CD4-positive, alpha-beta memory T cell (primary cell): ENCODE measurements at regions of chr11 and their contacts with region 1.

Region 1: GRCh38 chr11:121367001-121367843 is 74.7 kb downstream of the SC5D start:
- DNase-seq: peak; percentile 50 to 64 (median 59)
- H3K4me3 ChIP-seq: peak overlapping the region in 1 of 2 donors; percentile 34
- H3K4me3 Mint-ChIP-seq: peak overlapping the region; percentile 76 to 93 (median 86)
- H3K27ac ChIP-seq: peak overlapping the region; percentile 22
- H3K27ac Mint-ChIP-seq: peak overlapping the region; percentile 75 to 97 (median 93)
- H3K4me1 ChIP-seq: peaks cover 24% of the 10 kb centered on the region
- H3K4me1 Mint-ChIP-seq: peaks cover 23 to 60% (median 36%) of the 10 kb centered on the region in 4 donors
- H3K27me3 ChIP-seq: no peaks in the 10 kb centered on the region
- H3K27me3 Mint-ChIP-seq: peaks cover 0 to 1% of the 10 kb centered on the region in 2 donors

Region 2: DNA sequence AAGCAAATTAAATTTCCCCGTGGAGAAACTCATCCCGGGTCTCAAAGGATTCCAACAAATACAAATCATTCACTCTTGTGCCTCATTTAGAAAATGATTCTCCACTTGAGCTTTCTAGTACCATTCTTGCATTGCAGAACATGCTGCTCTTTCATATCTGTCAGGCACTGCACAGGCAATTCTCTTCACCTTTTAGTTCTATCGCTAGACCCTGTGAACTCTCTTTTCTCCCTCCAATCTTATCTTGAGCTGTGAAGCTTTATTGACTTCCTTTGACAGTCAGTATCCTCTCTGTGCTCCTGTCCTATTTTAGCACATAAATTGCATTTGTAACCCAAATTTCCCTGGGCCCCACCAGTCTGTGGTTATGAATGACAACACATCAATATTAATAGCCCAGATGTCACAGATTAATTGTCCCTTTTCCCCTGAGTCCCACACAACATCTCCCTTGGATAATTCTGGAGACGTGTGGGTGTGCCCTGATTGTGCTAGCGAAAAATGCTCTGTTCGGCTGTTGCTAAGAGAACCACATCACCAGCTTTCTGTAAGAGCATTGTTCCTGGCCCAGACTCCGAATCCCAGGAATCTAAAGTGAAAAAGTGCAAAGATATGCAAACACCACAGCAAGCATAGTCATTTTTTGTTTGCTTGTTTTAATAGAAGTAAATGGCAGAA is 97.1 kb before region 1 on chr11:
- CTCF ChIA-PET with region 1: no interaction called
- POLR2A ChIA-PET with region 1: no interaction called
- intact Hi-C with region 1: no loop called
- DNase-seq: peak in 1 of 5 donors; percentile 16
- H3K4me3 ChIP-seq: no peak overlapping the region
- H3K4me3 Mint-ChIP-seq: no peak overlapping the region
- H3K27ac ChIP-seq: no peak overlapping the region
- H3K27ac Mint-ChIP-seq: no peak overlapping the region
- H3K4me1 ChIP-seq: no peaks in the 10 kb centered on the region
- H3K4me1 Mint-ChIP-seq: peaks cover 2 to 5% (median 5%) of the 10 kb centered on the region in 4 donors
- H3K27me3 ChIP-seq: peaks cover 4% of the 10 kb centered on the region
- H3K27me3 Mint-ChIP-seq: peaks cover 26 to 44% of the 10 kb centered on the region in 2 donors

Region 3: GRCh38 chr11:121300972-121301699 is 66.1 kb before region 1 on chr11:
- CTCF ChIA-PET with region 1: no interaction called
- POLR2A ChIA-PET with region 1: no interaction called
- intact Hi-C with region 1: no loop called
- DNase-seq: no peak
- H3K4me3 ChIP-seq: no peak overlapping the region
- H3K4me3 Mint-ChIP-seq: no peak overlapping the region
- H3K27ac ChIP-seq: no peak overlapping the region
- H3K27ac Mint-ChIP-seq: peak overlapping the region in 4 of 7 donors; percentile 18 to 79 (median 59)
- H3K4me1 ChIP-seq: no peaks in the 10 kb centered on the region
- H3K4me1 Mint-ChIP-seq: peaks cover 21 to 37% (median 25%) of the 10 kb centered on the region in 4 donors
- H3K27me3 ChIP-seq: no peaks in the 10 kb centered on the region
- H3K27me3 Mint-ChIP-seq: no peaks in the 10 kb centered on the region

Region 4: DNA sequence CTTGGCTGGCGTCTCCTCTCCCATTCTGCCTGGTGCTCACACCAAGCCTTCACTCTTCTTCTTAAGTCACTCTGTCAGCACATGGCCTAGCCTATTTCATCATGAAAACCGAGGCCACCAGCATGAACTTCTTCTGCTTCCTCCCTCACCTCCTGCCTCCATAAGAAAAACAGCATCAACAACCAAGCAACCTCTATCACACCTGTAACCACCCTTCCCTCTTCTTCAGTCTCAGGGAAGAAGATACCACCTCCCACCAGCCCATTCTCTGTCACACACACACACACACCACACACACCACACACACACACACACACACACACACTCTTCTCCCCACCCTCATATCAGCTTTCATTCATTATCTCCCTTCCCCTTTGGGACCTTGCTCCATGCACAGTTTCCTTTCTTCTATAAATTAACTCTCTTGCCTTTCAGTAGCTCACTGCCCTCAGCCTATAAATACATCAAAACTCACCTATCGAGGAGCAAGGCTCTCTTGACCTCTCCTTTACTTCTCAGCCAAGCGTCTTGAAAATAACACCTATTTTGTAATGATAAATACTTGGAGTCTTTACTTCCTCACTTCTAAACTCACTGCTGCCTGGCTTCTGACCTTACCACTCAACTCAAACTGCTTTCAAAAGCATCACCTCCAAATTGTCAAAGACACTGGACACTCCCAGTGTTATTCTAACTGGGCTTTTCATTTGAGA is 38.1 kb before region 1 on chr11:
- CTCF ChIA-PET with region 1: interaction called, 3 read pairs
- POLR2A ChIA-PET with region 1: interaction called, 11 read pairs
- intact Hi-C with region 1: loop called (anchors 5 kb)
- DNase-seq: peak in 3 of 5 donors; percentile 15 to 25 (median 22)
- H3K4me3 ChIP-seq: no peak overlapping the region
- H3K4me3 Mint-ChIP-seq: no peak overlapping the region
- H3K27ac ChIP-seq: peak overlapping the region; percentile 31
- H3K27ac Mint-ChIP-seq: no peak overlapping the region
- H3K4me1 ChIP-seq: peaks cover 40% of the 10 kb centered on the region
- H3K4me1 Mint-ChIP-seq: peaks cover 10 to 13% (median 11%) of the 10 kb centered on the region in 4 donors
- H3K27me3 ChIP-seq: no peaks in the 10 kb centered on the region
- H3K27me3 Mint-ChIP-seq: peaks cover 0 to 2% of the 10 kb centered on the region in 2 donors

Region 5: GRCh38 chr11:121383716-121384115 is 16.5 kb after region 1 on chr11:
- CTCF ChIA-PET with region 1: interaction called, 19 read pairs
- POLR2A ChIA-PET with region 1: interaction called, 11 read pairs
- intact Hi-C with region 1: no loop called
- DNase-seq: no peak
- H3K4me3 ChIP-seq: no peak overlapping the region
- H3K4me3 Mint-ChIP-seq: peak overlapping the region in 1 of 8 donors; percentile 19
- H3K27ac ChIP-seq: no peak overlapping the region
- H3K27ac Mint-ChIP-seq: no peak overlapping the region
- H3K4me1 ChIP-seq: peaks cover 18% of the 10 kb centered on the region
- H3K4me1 Mint-ChIP-seq: peaks cover 18 to 35% (median 25%) of the 10 kb centered on the region in 4 donors
- H3K27me3 ChIP-seq: no peaks in the 10 kb centered on the region
- H3K27me3 Mint-ChIP-seq: no peaks in the 10 kb centered on the region

Region 6: GRCh38 chr11:121643535-121644512 is 276.6 kb after region 1 on chr11:
- CTCF ChIA-PET with region 1: no interaction called
- POLR2A ChIA-PET with region 1: no interaction called
- intact Hi-C with region 1: no loop called
- DNase-seq: no peak
- H3K4me3 ChIP-seq: no peak overlapping the region
- H3K4me3 Mint-ChIP-seq: no peak overlapping the region
- H3K27ac ChIP-seq: no peak overlapping the region
- H3K27ac Mint-ChIP-seq: peak overlapping the region in 1 of 7 donors; percentile 60
- H3K4me1 ChIP-seq: no peaks in the 10 kb centered on the region
- H3K4me1 Mint-ChIP-seq: peaks cover 0 to 9% (median 2%) of the 10 kb centered on the region in 4 donors
- H3K27me3 ChIP-seq: no peaks in the 10 kb centered on the region
- H3K27me3 Mint-ChIP-seq: no peaks in the 10 kb centered on the region